ENCODE measurements at regions of chr19 and their contacts with region 1.

Region 1: DNA sequence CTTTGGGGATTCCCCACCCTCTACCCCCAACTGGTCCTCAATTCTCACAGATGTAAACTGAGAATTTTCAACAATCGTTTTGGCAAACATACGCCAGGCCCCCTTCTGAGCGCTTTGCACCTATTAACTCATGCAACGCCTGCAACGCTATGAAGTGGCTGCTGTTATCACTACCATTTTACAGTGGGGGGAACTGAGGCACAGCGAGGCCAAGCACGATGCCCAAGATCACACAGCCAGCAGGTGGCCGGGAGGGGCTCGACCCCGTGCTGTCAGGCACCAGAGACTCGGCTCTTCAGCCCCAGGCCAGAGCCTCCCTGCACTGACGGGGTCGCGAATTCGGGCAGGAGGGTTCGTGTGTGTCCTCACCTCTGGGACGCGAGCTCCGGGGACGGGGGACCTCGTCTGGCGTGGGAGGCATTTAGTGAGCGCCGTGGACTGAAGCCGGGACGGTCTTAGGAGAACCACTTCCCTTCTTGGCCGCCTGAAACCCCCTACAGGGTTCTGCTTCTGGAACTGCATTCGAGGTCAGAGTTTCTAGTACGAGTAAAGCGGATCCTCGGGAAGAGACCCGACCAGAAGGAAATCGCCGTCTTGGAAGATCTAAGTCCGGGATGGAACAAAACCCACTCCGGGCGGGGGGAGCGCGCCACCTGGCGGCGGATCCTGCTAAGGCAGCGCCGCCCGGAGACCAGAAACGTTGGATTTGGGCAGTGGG is 21.0 kb downstream of the ZNF114 start:
- DNase-seq: peak; percentile 87 to 91
- ATAC-seq: peak; percentile 86 to 91
- H3K4me3 ChIP-seq: peak overlapping the region; percentile 49
- H3K27ac ChIP-seq: peak overlapping the region; percentile 34 to 81; a peak in 5 of 6 replicates
- H3K4me1 ChIP-seq: peaks cover 8% of the 10 kb centered on the region
- CTCF ChIP-seq: peak; percentile 99
- EP300 ChIP-seq: no peak
- POLR2A ChIP-seq: no peak
- RAD21 ChIP-seq: peak; percentile 92 to 93

Region 2: GRCh38 chr19:48271531-48272151 is 19.3 kb before region 1 on chr19:
- CTCF ChIA-PET with region 1: interaction called, 499 read pairs
- POLR2A ChIA-PET with region 1: no interaction called
- DNase-seq: peak; percentile 75 to 90
- ATAC-seq: peak; percentile 85 to 87
- H3K4me3 ChIP-seq: peak overlapping the region; percentile 64
- H3K27ac ChIP-seq: peak overlapping the region; percentile 80 to 89
- H3K4me1 ChIP-seq: 0 out of 3 replicates have a peak, but pooled peaks cover 11% of the 10 kb centered on the region
- CTCF ChIP-seq: no peak
- EP300 ChIP-seq: no peak
- POLR2A ChIP-seq: no peak; the same call in 1 of the 2 replicates
- RAD21 ChIP-seq: no peak

Region 3: GRCh38 chr19:48308631-48309586 is 18.0 kb after region 1 on chr19:
- CTCF ChIA-PET with region 1: interaction called, 140 read pairs
- POLR2A ChIA-PET with region 1: no interaction called
- DNase-seq: peak in 1 of 2 experiments; percentile 56
- ATAC-seq: peak; percentile 80 to 93
- H3K4me3 ChIP-seq: no peak overlapping the region
- H3K27ac ChIP-seq: no peak overlapping the region
- H3K4me1 ChIP-seq: peaks cover 5% of the 10 kb centered on the region; the same call in 1 of the 3 replicates
- CTCF ChIP-seq: peak; percentile 42
- EP300 ChIP-seq: no peak
- POLR2A ChIP-seq: no peak
- RAD21 ChIP-seq: peak in 1 of 2 experiments; percentile 17; a peak in 2 of 5 replicates

Region 4: GRCh38 chr19:48398375-48399235 is 107.7 kb after region 1 on chr19:
- CTCF ChIA-PET with region 1: no interaction called
- POLR2A ChIA-PET with region 1: no interaction called
- DNase-seq: peak; percentile 92 to 99
- ATAC-seq: peak; percentile 51 to 77
- H3K4me3 ChIP-seq: peak overlapping the region; percentile 70
- H3K27ac ChIP-seq: peak overlapping the region; percentile 95 to 97
- H3K4me1 ChIP-seq: peaks cover 55% of the 10 kb centered on the region
- CTCF ChIP-seq: no peak
- EP300 ChIP-seq: no peak
- POLR2A ChIP-seq: peak; percentile 95
- RAD21 ChIP-seq: no peak

Region 5: GRCh38 chr19:48424694-48425219 is 133.8 kb after region 1 on chr19:
- CTCF ChIA-PET with region 1: no interaction called
- POLR2A ChIA-PET with region 1: no interaction called
- DNase-seq: peak; percentile 87 to 92
- ATAC-seq: peak; percentile 90 to 93
- H3K4me3 ChIP-seq: no peak overlapping the region
- H3K27ac ChIP-seq: peak overlapping the region; percentile 75 to 88
- H3K4me1 ChIP-seq: peaks cover 20% of the 10 kb centered on the region
- CTCF ChIP-seq: no peak
- EP300 ChIP-seq: peak in 1 of 2 experiments; percentile 34; a peak in 1 of 5 replicates
- POLR2A ChIP-seq: peak; percentile 20; the same call in 1 of the 2 replicates
- RAD21 ChIP-seq: 0 out of 5 replicates have a peak, but pooled peaks have one; percentile 8 to 10

Measured in A549 (cell line).